ENCODE measurements at regions of chr7 and their contacts with region 1.

Region 1: GRCh38 chr7:35257251-35258124 is 3.6 kb upstream of the TBX20 start:
- DNase-seq: no peak
- H3K4me3 Mint-ChIP-seq: no peak overlapping the region
- H3K27ac Mint-ChIP-seq: no peak overlapping the region
- H3K4me1 Mint-ChIP-seq: peaks cover 10% of the 10 kb centered on the region
- H3K27me3 Mint-ChIP-seq: peaks cover 78% of the 10 kb centered on the region

Region 2: GRCh38 chr7:35185907-35186731 is 71.4 kb before region 1 on chr7:
- intact Hi-C with region 1: loop called (anchors 2 kb)
- DNase-seq: no peak
- H3K4me3 Mint-ChIP-seq: peak overlapping the region; percentile 43
- H3K27ac Mint-ChIP-seq: no peak overlapping the region
- H3K4me1 Mint-ChIP-seq: peaks cover 6% of the 10 kb centered on the region
- H3K27me3 Mint-ChIP-seq: peaks cover 29% of the 10 kb centered on the region